Naive thymus-derived CD4-positive, alpha-beta T cell (primary cell): ENCODE measurements at regions of chrX and their contacts with region 1.

Region 1: GRCh38 chrX:20523626-20524312 is 257.1 kb upstream of the RPS6KA3 start:
- DNase-seq: peak in 3 of 9 donors; percentile 13 to 24 (median 21)
- ATAC-seq: no peak
- H3K4me3 ChIP-seq: no peak overlapping the region
- H3K4me3 Mint-ChIP-seq: peak overlapping the region in 1 of 10 donors; percentile 38
- H3K27ac ChIP-seq: no peak overlapping the region
- H3K27ac Mint-ChIP-seq: peak overlapping the region in 1 of 9 donors; percentile 26
- H3K4me1 ChIP-seq: no peaks in the 10 kb centered on the region
- H3K4me1 Mint-ChIP-seq: peaks cover 4 to 22% (median 6%) of the 10 kb centered on the region in 7 donors
- H3K27me3 ChIP-seq: no peaks in the 10 kb centered on the region
- H3K27me3 Mint-ChIP-seq: peaks cover 0 to 47% (median 0%) of the 10 kb centered on the region in 5 donors

Region 2: GRCh38 chrX:20101934-20102581 is 421.7 kb before region 1 on chrX:
- CTCF ChIA-PET with region 1: no interaction called
- POLR2A ChIA-PET with region 1: no interaction called
- intact Hi-C with region 1: no loop called
- DNase-seq: no peak
- ATAC-seq: no peak
- H3K4me3 ChIP-seq: no peak overlapping the region
- H3K4me3 Mint-ChIP-seq: no peak overlapping the region
- H3K27ac ChIP-seq: no peak overlapping the region
- H3K27ac Mint-ChIP-seq: no peak overlapping the region
- H3K4me1 ChIP-seq: no peaks in the 10 kb centered on the region
- H3K4me1 Mint-ChIP-seq: peaks cover 0 to 3% (median 0%) of the 10 kb centered on the region in 7 donors
- H3K27me3 ChIP-seq: no peaks in the 10 kb centered on the region
- H3K27me3 Mint-ChIP-seq: peaks cover 0 to 4% (median 0%) of the 10 kb centered on the region in 5 donors

Region 3: DNA sequence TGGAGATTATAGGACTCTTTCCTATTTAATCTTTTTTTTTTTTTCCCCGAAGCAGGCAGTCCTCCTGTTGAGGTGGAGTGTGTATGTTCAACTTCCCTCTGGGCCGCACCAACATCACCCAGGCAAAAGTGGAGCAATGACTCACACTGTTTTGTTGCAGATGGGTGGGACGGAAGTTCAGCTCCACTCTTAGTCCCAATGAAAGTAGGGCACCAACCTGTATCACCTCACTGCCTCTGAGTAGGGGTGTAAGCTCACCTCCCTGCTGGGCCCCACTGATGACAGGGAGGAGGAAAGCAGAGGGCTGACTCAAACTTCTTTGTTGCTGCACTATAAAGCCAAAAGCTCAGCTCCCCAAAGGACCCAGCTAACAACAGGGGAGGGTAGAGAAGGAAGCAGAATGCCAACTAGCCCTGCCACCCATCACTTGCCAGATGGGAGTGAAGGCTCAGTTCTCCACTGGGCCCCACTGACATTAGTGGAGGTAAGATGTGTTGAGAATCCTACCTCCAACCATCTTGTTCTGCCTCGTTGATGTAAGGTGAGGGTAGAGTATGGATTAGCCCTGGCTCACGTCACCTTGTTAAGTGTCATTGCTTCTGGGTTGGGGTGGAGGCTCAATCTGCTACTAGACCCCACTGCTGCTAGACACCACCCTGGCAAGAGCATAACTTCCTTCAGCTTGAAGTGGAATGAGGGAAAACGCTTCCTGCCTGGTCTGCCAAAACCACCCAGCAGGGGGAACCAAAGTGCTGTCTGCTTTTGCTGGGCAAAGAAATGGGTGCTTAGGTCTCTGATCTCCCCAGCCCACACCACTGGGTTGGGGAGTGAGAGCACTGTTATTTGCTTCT is 271.2 kb before region 1 on chrX:
- CTCF ChIA-PET with region 1: no interaction called
- POLR2A ChIA-PET with region 1: no interaction called
- intact Hi-C with region 1: loop called (anchors 1 to 2 kb)
- DNase-seq: peak; percentile 45 to 73 (median 66)
- ATAC-seq: peak; percentile 88
- H3K4me3 ChIP-seq: no peak overlapping the region
- H3K4me3 Mint-ChIP-seq: peak overlapping the region in 1 of 10 donors; percentile 51
- H3K27ac ChIP-seq: no peak overlapping the region
- H3K27ac Mint-ChIP-seq: peak overlapping the region in 5 of 9 donors; percentile 36 to 52 (median 48)
- H3K4me1 ChIP-seq: peaks cover 16 to 31% of the 10 kb centered on the region in 2 donors
- H3K4me1 Mint-ChIP-seq: peaks cover 5 to 64% (median 52%) of the 10 kb centered on the region in 7 donors
- H3K27me3 ChIP-seq: no peaks in the 10 kb centered on the region
- H3K27me3 Mint-ChIP-seq: no peaks in the 10 kb centered on the region

Region 4: DNA sequence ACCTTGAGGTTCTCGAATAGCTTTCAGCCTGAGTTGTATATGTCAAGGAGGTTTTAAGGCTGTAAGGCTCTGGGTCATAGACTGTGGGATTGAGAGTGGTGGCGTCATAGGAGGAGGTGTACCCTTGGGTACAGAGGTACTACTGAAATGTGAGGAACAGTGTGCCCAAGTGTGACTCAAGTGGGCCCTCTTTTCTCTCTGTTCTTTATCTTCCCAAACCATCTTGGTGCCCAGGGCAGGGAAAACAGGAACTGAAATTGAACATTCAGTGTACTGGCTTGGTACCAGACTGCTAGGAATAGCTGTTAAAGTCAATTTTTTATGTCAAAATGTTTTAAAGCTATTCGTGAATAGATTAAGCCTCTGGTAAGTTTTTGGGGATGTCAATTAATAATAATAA is 120.8 kb before region 1 on chrX:
- CTCF ChIA-PET with region 1: no interaction called
- POLR2A ChIA-PET with region 1: no interaction called
- intact Hi-C with region 1: no loop called
- DNase-seq: no peak
- ATAC-seq: no peak
- H3K4me3 ChIP-seq: no peak overlapping the region
- H3K4me3 Mint-ChIP-seq: no peak overlapping the region
- H3K27ac ChIP-seq: no peak overlapping the region
- H3K27ac Mint-ChIP-seq: no peak overlapping the region
- H3K4me1 ChIP-seq: no peaks in the 10 kb centered on the region
- H3K4me1 Mint-ChIP-seq: peaks cover 0 to 14% (median 8%) of the 10 kb centered on the region in 7 donors
- H3K27me3 ChIP-seq: no peaks in the 10 kb centered on the region
- H3K27me3 Mint-ChIP-seq: no peaks in the 10 kb centered on the region

Region 5: DNA sequence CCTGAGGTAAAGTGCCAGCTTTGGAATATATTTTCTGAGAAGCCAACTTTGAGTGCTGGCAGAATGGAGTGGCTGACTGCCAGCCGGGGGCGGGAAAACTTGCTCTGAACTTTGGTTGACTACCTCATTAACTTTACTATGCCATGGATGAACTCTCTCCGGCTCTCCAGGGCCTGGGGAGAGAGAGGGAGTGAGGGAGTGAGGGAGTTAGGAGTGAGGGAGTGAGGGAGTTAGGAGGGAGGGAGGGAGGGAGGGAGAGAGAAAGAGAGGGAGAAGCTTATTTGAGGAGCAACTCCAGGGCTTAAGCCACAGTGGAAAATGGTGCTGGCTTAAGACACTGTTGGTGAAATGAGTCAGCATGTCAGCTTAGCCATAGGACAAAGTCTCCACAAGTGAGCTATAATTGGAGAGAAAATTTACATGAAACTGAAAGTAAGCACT is 23.9 kb after region 1 on chrX:
- CTCF ChIA-PET with region 1: no interaction called
- POLR2A ChIA-PET with region 1: no interaction called
- intact Hi-C with region 1: no loop called
- DNase-seq: no peak
- ATAC-seq: no peak
- H3K4me3 ChIP-seq: no peak overlapping the region
- H3K4me3 Mint-ChIP-seq: no peak overlapping the region
- H3K27ac ChIP-seq: no peak overlapping the region
- H3K27ac Mint-ChIP-seq: no peak overlapping the region
- H3K4me1 ChIP-seq: no peaks in the 10 kb centered on the region
- H3K4me1 Mint-ChIP-seq: peaks cover 0 to 2% (median 0%) of the 10 kb centered on the region in 7 donors
- H3K27me3 ChIP-seq: no peaks in the 10 kb centered on the region
- H3K27me3 Mint-ChIP-seq: peaks cover 0 to under 1% (median 0%) of the 10 kb centered on the region in 5 donors

Region 6: GRCh38 chrX:20753076-20753475 is 229.3 kb after region 1 on chrX:
- CTCF ChIA-PET with region 1: no interaction called
- POLR2A ChIA-PET with region 1: no interaction called
- intact Hi-C with region 1: no loop called
- DNase-seq: no peak
- ATAC-seq: no peak
- H3K4me3 ChIP-seq: no peak overlapping the region
- H3K4me3 Mint-ChIP-seq: no peak overlapping the region
- H3K27ac ChIP-seq: no peak overlapping the region
- H3K27ac Mint-ChIP-seq: no peak overlapping the region
- H3K4me1 ChIP-seq: no peaks in the 10 kb centered on the region
- H3K4me1 Mint-ChIP-seq: no peaks in the 10 kb centered on the region
- H3K27me3 ChIP-seq: no peaks in the 10 kb centered on the region
- H3K27me3 Mint-ChIP-seq: peaks cover 0 to 8% (median 4%) of the 10 kb centered on the region in 5 donors